Testis (tissue), 5 donors: ENCODE measurements at regions of chr21 and their contacts with region 1.

Region 1: GRCh38 chr21:26842976-26843932 is 2.0 kb downstream of the ADAMTS1 start:
- DNase-seq: peak; percentile 92
- H3K4me3 ChIP-seq: peak overlapping the region; percentile 76 to 91
- H3K27ac ChIP-seq: peak overlapping the region; percentile 75 to 93
- H3K4me1 ChIP-seq: peaks cover 4% of the 10 kb centered on the region
- H3K27me3 ChIP-seq: no peaks in the 10 kb centered on the region
- CTCF ChIP-seq: peak in 2 of 3 experiments; percentile 27 to 33
- POLR2A ChIP-seq: no peak

Region 2: GRCh38 chr21:27700974-27701614 is 857.8 kb after region 1 on chr21:
- intact Hi-C with region 1: loop called (anchors 5 kb)
- DNase-seq: peak; percentile 90
- H3K4me3 ChIP-seq: no peak overlapping the region
- H3K27ac ChIP-seq: no peak overlapping the region
- H3K4me1 ChIP-seq: no peaks in the 10 kb centered on the region
- H3K27me3 ChIP-seq: no peaks in the 10 kb centered on the region
- CTCF ChIP-seq: peak; percentile 81 to 85 (median 83)
- POLR2A ChIP-seq: no peak

Region 3: GRCh38 chr21:28745131-28746016 is 1902.1 kb after region 1 on chr21:
- intact Hi-C with region 1: loop called (anchors 10 kb)
- DNase-seq: peak; percentile 85
- H3K4me3 ChIP-seq: peak overlapping the region; percentile 36 to 51
- H3K27ac ChIP-seq: peak overlapping the region in 1 of 2 donors; percentile 48
- H3K4me1 ChIP-seq: no peaks in the 10 kb centered on the region
- H3K27me3 ChIP-seq: no peaks in the 10 kb centered on the region
- CTCF ChIP-seq: peak; percentile 77 to 96 (median 87)
- POLR2A ChIP-seq: no peak